Psoas muscle (tissue), 8 donors: ENCODE measurements at regions of chr10 and their contacts with region 1.

Region 1: GRCh38 chr10:61835069-61835945 is 66.2 kb upstream of the ARID5B start:
- DNase-seq: no peak
- ATAC-seq: peak in 1 of 4 donors; percentile 65
- H3K4me3 ChIP-seq: no peak overlapping the region
- H3K27ac ChIP-seq: no peak overlapping the region
- H3K4me1 ChIP-seq: peaks cover 29% of the 10 kb centered on the region
- H3K27me3 ChIP-seq: no peaks in the 10 kb centered on the region
- CTCF ChIP-seq: peak; percentile 28

Region 2: DNA sequence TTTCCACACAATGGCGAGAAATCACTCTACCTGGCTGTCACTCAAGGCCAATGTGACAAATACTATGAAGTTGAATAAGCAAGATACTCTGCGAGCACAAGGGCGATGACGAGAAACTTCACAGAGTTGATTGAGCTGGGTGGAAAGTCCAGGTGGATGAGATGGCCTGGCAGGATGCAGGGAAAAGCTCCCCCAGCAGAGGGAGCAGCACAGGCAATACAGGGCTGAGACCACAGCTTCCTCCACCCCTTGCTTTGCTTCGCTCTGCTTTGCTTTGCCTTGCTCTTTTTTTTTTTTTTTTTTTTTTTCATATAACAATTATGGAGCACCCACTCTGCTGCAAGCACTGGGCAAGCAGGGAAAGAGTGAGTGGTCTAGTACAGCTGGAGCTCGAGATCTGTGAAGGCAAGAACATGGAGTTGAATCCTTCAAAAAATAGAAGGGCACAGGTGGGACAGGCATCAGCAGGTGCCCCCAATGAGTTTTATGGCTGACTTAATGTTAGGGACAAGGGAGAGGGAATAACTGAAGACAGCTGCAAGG is 84.3 kb before region 1 on chr10:
- intact Hi-C with region 1: loop called in 1 of 2 experiments (anchors 5 kb)
- DNase-seq: peak; percentile 50 to 58
- ATAC-seq: peak; percentile 75 to 88 (median 79)
- H3K4me3 ChIP-seq: no peak overlapping the region
- H3K27ac ChIP-seq: no peak overlapping the region
- H3K4me1 ChIP-seq: peaks cover 11% of the 10 kb centered on the region
- H3K27me3 ChIP-seq: no peaks in the 10 kb centered on the region
- CTCF ChIP-seq: peak; percentile 64

Region 3: GRCh38 chr10:61786728-61787127 is 48.6 kb before region 1 on chr10:
- intact Hi-C with region 1: loop called in 1 of 2 experiments (anchors 5 kb)
- DNase-seq: no peak
- ATAC-seq: no peak
- H3K4me3 ChIP-seq: peak overlapping the region; percentile 23
- H3K27ac ChIP-seq: no peak overlapping the region
- H3K4me1 ChIP-seq: peaks cover 10% of the 10 kb centered on the region
- H3K27me3 ChIP-seq: no peaks in the 10 kb centered on the region
- CTCF ChIP-seq: no peak